CD4-positive, alpha-beta memory T cell (primary cell): ENCODE measurements at regions of chr18 and their contacts with region 1.

Region 1: GRCh38 chr18:50819728-50820378 is at the start of gene MRO:
- DNase-seq: peak; percentile 71 to 77 (median 75)
- H3K4me3 ChIP-seq: peak within 1 kb of the TSS in 1 of 2 donors; percentile 59
- H3K4me3 Mint-ChIP-seq: peak within 1 kb of the TSS in 1 of 8 donors; percentile 43
- H3K27ac ChIP-seq: no peak within 1 kb of the TSS
- H3K27ac Mint-ChIP-seq: no peak within 1 kb of the TSS
- H3K4me1 ChIP-seq: peaks cover 20% of the 10 kb centered on the region
- H3K4me1 Mint-ChIP-seq: no peaks in the 10 kb centered on the region
- H3K27me3 ChIP-seq: peaks cover 4% of the 10 kb centered on the region
- H3K27me3 Mint-ChIP-seq: peaks cover 8 to 17% of the 10 kb centered on the region in 2 donors
- total RNA-seq, gene MRO: not detected

Region 2: DNA sequence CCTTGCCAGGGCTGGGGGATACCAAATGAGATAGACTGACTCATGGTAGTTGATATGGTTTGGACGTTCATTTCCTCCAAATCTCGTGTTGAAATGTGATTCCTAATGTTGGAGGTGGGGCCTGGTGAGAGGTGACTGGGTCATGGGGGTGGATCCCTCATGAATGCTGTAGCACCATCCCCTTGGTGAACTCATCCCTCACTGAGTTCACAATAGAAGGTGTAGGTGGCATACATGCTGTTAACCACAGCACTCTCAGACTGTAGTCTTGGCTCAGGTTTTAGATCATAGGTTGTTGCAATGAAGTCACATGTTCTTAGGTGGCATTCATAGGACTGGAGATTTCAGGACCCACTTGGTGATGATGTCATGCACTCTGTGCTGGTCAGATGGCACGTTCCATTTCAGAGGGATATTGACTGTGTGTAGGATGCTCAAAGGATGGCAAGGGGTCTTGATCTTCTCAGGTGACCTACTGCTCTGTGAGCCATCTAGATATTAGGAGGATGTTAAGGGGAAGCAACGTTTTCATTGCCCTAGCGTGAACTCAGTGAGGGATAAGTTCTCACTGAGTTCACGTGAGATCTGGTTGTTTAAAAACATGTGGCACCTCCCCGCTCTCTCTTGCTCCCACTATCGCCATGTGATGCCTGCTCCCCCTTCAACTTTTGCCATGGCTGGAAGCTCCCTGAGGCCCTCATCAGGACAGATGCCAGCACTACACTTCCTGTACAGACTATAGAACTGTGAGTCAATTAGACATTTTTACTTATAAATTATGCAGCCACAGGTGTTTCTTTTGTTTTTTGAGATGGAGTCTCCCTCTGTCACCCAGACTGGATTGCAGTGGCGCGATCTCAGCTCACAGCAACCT is 932.7 kb before region 1 on chr18:
- CTCF ChIA-PET with region 1: no interaction called
- POLR2A ChIA-PET with region 1: no interaction called
- intact Hi-C with region 1: no loop called
- DNase-seq: no peak
- H3K4me3 ChIP-seq: no peak overlapping the region
- H3K4me3 Mint-ChIP-seq: no peak overlapping the region
- H3K27ac ChIP-seq: no peak overlapping the region
- H3K27ac Mint-ChIP-seq: no peak overlapping the region
- H3K4me1 ChIP-seq: no peaks in the 10 kb centered on the region
- H3K4me1 Mint-ChIP-seq: no peaks in the 10 kb centered on the region
- H3K27me3 ChIP-seq: no peaks in the 10 kb centered on the region
- H3K27me3 Mint-ChIP-seq: peaks cover 11 to 13% of the 10 kb centered on the region in 2 donors

Region 3: GRCh38 chr18:50786864-50787263 is 33.0 kb before region 1 on chr18:
- CTCF ChIA-PET with region 1: no interaction called
- POLR2A ChIA-PET with region 1: no interaction called
- intact Hi-C with region 1: no loop called
- DNase-seq: no peak
- H3K4me3 ChIP-seq: no peak overlapping the region
- H3K4me3 Mint-ChIP-seq: no peak overlapping the region
- H3K27ac ChIP-seq: no peak overlapping the region
- H3K27ac Mint-ChIP-seq: no peak overlapping the region
- H3K4me1 ChIP-seq: no peaks in the 10 kb centered on the region
- H3K4me1 Mint-ChIP-seq: no peaks in the 10 kb centered on the region
- H3K27me3 ChIP-seq: no peaks in the 10 kb centered on the region
- H3K27me3 Mint-ChIP-seq: peaks cover 6 to 7% of the 10 kb centered on the region in 2 donors

Region 4: GRCh38 chr18:50878345-50879301 is 58.8 kb after region 1 on chr18 and contains the start of gene ME2:
- CTCF ChIA-PET with region 1: interaction called, 5 read pairs
- POLR2A ChIA-PET with region 1: interaction called, 5 read pairs
- intact Hi-C with region 1: loop called (anchors 1 kb)
- DNase-seq: peak; percentile 86 to 94 (median 87)
- H3K4me3 ChIP-seq: peak within 1 kb of the TSS; percentile 76 to 94
- H3K4me3 Mint-ChIP-seq: peak within 1 kb of the TSS; percentile 97 to 99 (median 99)
- H3K27ac ChIP-seq: peak within 1 kb of the TSS; percentile 88
- H3K27ac Mint-ChIP-seq: peak within 1 kb of the TSS; percentile 96 to 99 (median 99)
- H3K4me1 ChIP-seq: peaks cover 44% of the 10 kb centered on the region
- H3K4me1 Mint-ChIP-seq: peaks cover 19 to 32% (median 26%) of the 10 kb centered on the region in 4 donors
- H3K27me3 ChIP-seq: no peaks in the 10 kb centered on the region
- H3K27me3 Mint-ChIP-seq: no peaks in the 10 kb centered on the region
- total RNA-seq, gene ME2: 48.6 to 53.5 TPM

Region 5: GRCh38 chr18:51029694-51030536 is 210.1 kb after region 1 on chr18 and contains the start of gene SMAD4:
- CTCF ChIA-PET with region 1: interaction called, 11 read pairs
- POLR2A ChIA-PET with region 1: interaction called, 3 read pairs
- intact Hi-C with region 1: no loop called
- DNase-seq: peak; percentile 96 to 98 (median 97)
- H3K4me3 ChIP-seq: peak within 1 kb of the TSS; percentile 47 to 53
- H3K4me3 Mint-ChIP-seq: peak within 1 kb of the TSS; percentile 95 to 100 (median 98)
- H3K27ac ChIP-seq: peak within 1 kb of the TSS; percentile 83
- H3K27ac Mint-ChIP-seq: peak within 1 kb of the TSS; percentile 98 to 99 (median 99)
- H3K4me1 ChIP-seq: peaks cover 80% of the 10 kb centered on the region
- H3K4me1 Mint-ChIP-seq: peaks cover 39 to 63% (median 48%) of the 10 kb centered on the region in 4 donors
- H3K27me3 ChIP-seq: no peaks in the 10 kb centered on the region
- H3K27me3 Mint-ChIP-seq: no peaks in the 10 kb centered on the region
- total RNA-seq, gene SMAD4: 143 to 155 TPM

Region 6: GRCh38 chr18:51051105-51051712 is 231.4 kb after region 1 on chr18:
- CTCF ChIA-PET with region 1: interaction called, 120 read pairs
- POLR2A ChIA-PET with region 1: no interaction called
- intact Hi-C with region 1: loop called (anchors 1 kb)
- DNase-seq: peak; percentile 54 to 66 (median 59)
- H3K4me3 ChIP-seq: no peak overlapping the region
- H3K4me3 Mint-ChIP-seq: peak overlapping the region in 1 of 8 donors; percentile 36
- H3K27ac ChIP-seq: no peak overlapping the region
- H3K27ac Mint-ChIP-seq: peak overlapping the region in 6 of 7 donors; percentile 2 to 71 (median 52)
- H3K4me1 ChIP-seq: peaks cover 16% of the 10 kb centered on the region
- H3K4me1 Mint-ChIP-seq: peaks cover 21 to 36% (median 31%) of the 10 kb centered on the region in 4 donors
- H3K27me3 ChIP-seq: no peaks in the 10 kb centered on the region
- H3K27me3 Mint-ChIP-seq: no peaks in the 10 kb centered on the region

Region 7: GRCh38 chr18:51724790-51725721 is 905.2 kb after region 1 on chr18:
- CTCF ChIA-PET with region 1: no interaction called
- POLR2A ChIA-PET with region 1: no interaction called
- intact Hi-C with region 1: loop called (anchors 5 kb)
- DNase-seq: no peak
- H3K4me3 ChIP-seq: no peak overlapping the region
- H3K4me3 Mint-ChIP-seq: no peak overlapping the region
- H3K27ac ChIP-seq: no peak overlapping the region
- H3K27ac Mint-ChIP-seq: no peak overlapping the region
- H3K4me1 ChIP-seq: no peaks in the 10 kb centered on the region
- H3K4me1 Mint-ChIP-seq: no peaks in the 10 kb centered on the region
- H3K27me3 ChIP-seq: no peaks in the 10 kb centered on the region
- H3K27me3 Mint-ChIP-seq: peaks cover 0 to 2% of the 10 kb centered on the region in 2 donors

Region 8: DNA sequence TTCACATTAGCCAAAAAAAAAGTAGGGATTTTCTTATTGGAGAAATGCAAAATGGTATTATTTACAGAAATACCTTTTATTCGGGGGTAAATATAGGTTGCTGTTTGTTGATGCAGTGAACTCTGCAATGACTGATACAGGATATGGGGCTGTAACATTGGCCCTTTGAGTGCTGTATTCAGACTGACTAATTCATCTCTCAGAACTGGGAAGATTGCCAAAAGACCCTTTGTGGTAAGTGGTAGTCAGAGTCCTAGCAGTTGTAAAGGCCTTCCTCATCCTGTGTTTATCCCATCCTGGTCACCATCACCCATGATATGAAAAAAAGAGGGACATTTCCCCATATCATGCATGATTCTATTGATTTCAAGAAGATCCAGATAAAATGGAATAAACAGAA is 1506.1 kb after region 1 on chr18:
- CTCF ChIA-PET with region 1: no interaction called
- POLR2A ChIA-PET with region 1: no interaction called
- intact Hi-C with region 1: no loop called
- DNase-seq: no peak
- H3K4me3 ChIP-seq: no peak overlapping the region
- H3K4me3 Mint-ChIP-seq: no peak overlapping the region
- H3K27ac ChIP-seq: no peak overlapping the region
- H3K27ac Mint-ChIP-seq: no peak overlapping the region
- H3K4me1 ChIP-seq: no peaks in the 10 kb centered on the region
- H3K4me1 Mint-ChIP-seq: no peaks in the 10 kb centered on the region
- H3K27me3 ChIP-seq: no peaks in the 10 kb centered on the region
- H3K27me3 Mint-ChIP-seq: no peaks in the 10 kb centered on the region